Activated T-helper 2 cell treated with anti-CD3 and anti-CD28 coated beads, Interferon-gamma antibody, Interleukin-2, Interleukin-4, amounts not matched to agents 10 μg/mL and 5 μg/mL and 100 μg/mL, durations not matched to agents 14 hours and 24 hours and 36 hours (primary cell): ENCODE measurements at regions of chr12 and their contacts with region 1.

Region 1: GRCh38 chr12:32755654-32756475 is at the start of gene YARS2:
- DNase-seq: peak; percentile 85
- H3K4me3 Mint-ChIP-seq: peak within 1 kb of the TSS; percentile 92
- H3K27ac Mint-ChIP-seq: peak within 1 kb of the TSS; percentile 84
- H3K4me1 Mint-ChIP-seq: peaks cover 22% of the 10 kb centered on the region
- H3K27me3 Mint-ChIP-seq: no peaks in the 10 kb centered on the region
- total RNA-seq, gene YARS2: 29.3 and 30.3 TPM in 2 replicates

Region 2: DNA sequence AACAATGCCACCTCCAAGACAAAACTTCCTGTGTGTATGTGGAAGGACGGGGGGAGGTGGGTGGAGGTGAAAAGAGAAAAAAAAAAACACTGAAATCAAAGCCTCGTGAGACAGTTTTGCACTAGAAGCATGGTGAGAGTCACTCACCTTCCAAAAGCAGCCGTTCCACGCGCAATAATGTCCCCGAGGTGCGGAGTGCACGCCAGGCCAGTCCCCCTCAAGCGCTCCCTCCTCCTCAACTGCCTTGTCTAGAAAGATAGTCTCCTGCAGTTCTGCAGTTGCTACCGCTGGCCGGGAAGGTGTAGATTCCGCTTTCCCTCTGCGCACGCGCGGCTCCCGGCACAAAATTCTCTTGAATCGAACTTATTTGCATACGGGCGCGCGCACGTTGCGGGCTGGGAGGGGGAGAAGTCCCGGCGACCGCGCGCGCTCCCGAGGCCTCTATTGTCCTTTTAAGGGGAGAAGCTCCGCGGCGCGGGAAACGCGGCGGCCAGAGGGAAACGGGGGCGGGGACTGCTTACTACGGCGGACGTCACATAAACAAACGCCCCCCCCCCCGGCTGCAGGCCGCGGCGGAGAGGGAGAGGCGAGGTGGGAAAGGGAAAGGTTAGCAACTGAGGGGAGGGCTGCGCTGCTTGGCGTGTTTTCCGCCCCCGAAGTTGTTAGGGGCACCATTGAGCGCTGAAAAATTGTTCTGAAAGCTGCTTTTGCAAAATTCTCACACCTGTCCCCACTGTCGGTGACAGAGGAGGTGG is 1429.8 kb before region 1 on chr12 and contains the start of gene SINHCAF:
- intact Hi-C with region 1: loop called (anchors 1 kb)
- DNase-seq: peak; percentile 98
- H3K4me3 Mint-ChIP-seq: peak within 1 kb of the TSS; percentile 98
- H3K27ac Mint-ChIP-seq: peak within 1 kb of the TSS; percentile 99
- H3K4me1 Mint-ChIP-seq: peaks cover 17% of the 10 kb centered on the region
- H3K27me3 Mint-ChIP-seq: peaks cover 7% of the 10 kb centered on the region
- total RNA-seq, gene SINHCAF: 223 and 231 TPM in 2 replicates

Region 3: DNA sequence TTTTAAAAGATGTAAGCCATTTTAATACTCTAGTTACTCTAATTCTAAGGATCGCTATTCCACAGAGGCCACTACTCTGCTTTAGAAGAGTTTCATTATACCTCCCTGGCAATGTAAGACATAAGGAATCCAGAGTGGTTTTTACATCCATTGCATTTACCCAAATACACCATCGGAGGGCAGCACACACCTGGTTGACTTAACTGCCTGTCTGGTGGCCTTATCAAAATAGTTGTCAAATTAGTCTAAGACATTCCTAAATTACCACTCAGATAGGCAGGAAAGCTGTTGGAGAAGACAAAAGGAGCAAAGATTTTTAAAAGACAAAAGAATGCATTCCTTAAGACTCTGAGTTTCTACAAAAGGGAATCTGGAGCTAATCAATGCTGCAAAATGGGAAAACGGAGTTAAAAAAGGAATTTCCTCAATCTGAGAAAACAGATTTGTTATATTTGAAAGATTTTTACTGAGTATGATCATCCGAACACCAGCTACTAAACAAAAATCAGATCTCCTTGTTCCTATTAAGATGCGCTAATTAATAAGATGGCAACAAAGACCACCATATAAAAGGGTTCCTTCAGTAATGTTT is 390.3 kb before region 1 on chr12:
- intact Hi-C with region 1: loop called (anchors 5 kb)
- DNase-seq: no peak
- H3K4me3 Mint-ChIP-seq: no peak overlapping the region
- H3K27ac Mint-ChIP-seq: no peak overlapping the region
- H3K4me1 Mint-ChIP-seq: no peaks in the 10 kb centered on the region
- H3K27me3 Mint-ChIP-seq: no peaks in the 10 kb centered on the region

Region 4: DNA sequence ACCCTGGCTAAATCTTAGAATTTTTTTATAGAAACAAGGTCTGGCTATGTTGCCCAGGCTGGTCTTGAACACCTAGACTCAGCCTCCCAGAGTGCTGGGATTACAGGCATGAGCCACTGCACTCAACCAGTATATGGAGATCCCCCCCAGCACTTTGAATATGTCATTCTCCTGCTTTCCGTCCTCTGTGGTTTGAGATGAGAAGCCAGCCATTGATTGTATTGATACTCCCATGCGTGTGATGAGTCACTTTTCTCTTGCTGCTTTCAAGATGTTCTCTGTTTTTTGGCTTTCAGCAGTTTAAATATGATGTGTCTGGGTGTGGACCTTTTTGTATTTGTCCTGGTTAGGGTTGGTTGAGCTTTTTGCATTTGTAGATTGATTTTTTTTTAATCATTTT is 152.0 kb before region 1 on chr12:
- intact Hi-C with region 1: loop called (anchors 5 kb)
- DNase-seq: peak; percentile 61
- H3K4me3 Mint-ChIP-seq: no peak overlapping the region
- H3K27ac Mint-ChIP-seq: peak overlapping the region; percentile 72
- H3K4me1 Mint-ChIP-seq: peaks cover 31% of the 10 kb centered on the region
- H3K27me3 Mint-ChIP-seq: no peaks in the 10 kb centered on the region

Region 5: DNA sequence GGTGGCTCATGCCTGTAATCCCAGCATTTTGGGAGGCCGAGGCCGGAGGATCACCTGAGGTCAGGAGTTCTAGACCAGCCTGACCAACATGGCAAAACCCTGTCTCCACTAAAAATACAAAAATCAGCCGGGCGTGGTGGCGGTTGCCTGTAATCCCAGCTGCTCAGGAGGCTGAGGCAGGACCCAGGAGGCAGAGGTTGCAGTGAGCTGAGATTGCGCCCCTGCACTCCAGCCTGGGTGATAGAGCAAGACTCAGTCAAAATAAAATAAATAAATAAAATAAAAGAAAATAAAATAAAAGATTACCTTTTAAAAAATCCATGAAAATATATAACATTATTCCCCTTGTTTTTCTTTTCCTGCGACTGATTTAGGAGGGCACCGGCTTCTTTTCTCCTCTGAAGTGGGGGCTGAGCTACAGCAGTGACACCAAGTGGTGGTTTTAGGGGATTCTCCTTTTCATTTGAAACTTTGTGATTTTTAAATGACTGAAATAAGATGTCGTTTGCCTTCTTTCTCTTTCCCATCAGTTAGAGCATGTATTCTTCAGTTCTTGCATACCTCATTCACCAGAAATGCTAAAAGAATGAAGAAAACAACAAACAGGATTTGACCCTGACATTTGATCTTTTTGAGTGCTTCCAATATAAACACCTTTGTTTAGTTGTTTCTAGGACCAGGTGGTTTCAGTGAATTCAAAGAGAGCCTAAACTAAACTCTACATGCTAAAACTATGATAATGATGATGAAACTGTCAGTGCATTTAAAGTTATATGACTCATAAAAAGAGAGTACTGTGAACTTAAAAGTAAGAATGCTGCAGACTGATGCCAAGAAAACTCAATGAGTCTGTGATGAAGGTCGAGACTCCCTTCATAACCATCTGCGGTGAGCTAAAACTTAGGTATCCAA is 163.3 kb after region 1 on chr12:
- intact Hi-C with region 1: loop called (anchors 1 kb)
- DNase-seq: no peak
- H3K4me3 Mint-ChIP-seq: no peak overlapping the region
- H3K27ac Mint-ChIP-seq: no peak overlapping the region
- H3K4me1 Mint-ChIP-seq: no peaks in the 10 kb centered on the region
- H3K27me3 Mint-ChIP-seq: peaks cover 3% of the 10 kb centered on the region